BJ (cell line): ENCODE measurements at regions of chr3 and their contacts with region 1.

Region 1: DNA sequence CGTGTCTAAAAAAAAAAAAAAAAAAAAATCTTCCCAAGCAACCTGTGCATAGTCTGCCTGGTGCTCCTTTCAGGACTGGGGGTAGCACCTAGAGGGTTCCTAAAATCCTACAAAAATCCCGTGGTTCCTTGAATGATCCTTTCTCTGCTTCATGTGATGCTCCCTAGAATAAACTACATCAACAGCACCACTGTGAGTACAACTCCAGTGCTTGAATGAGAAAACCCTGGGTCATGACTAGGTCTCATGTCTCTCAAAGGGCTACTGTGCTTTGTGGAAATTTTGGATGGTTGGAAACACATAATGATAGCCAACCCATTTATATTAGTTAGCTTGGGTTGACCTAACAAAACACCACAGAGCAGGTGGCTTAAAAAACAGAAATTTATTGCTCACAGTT is 243.5 kb downstream of the OPA1 start:
- DNase-seq: no peak
- H3K4me3 ChIP-seq: no peak overlapping the region
- H3K27me3 ChIP-seq: no peaks in the 10 kb centered on the region
- CTCF ChIP-seq: no peak

Region 2: GRCh38 chr3:194623449-194624290 is 787.2 kb after region 1 on chr3:
- CTCF ChIA-PET with region 1: no interaction called
- POLR2A ChIA-PET with region 1: interaction called, 13 read pairs
- DNase-seq: no peak
- H3K4me3 ChIP-seq: no peak overlapping the region
- H3K27me3 ChIP-seq: no peaks in the 10 kb centered on the region
- CTCF ChIP-seq: no peak